ENCODE measurements at regions of chr2 and their contacts with region 1.

Region 1: GRCh38 chr2:210195101-210195852 is 24.1 kb upstream of the KANSL1L start:
- DNase-seq: peak; percentile 65
- ATAC-seq: peak; percentile 33
- H3K4me3 ChIP-seq: no peak overlapping the region
- H3K4me3 Mint-ChIP-seq: no peak overlapping the region
- H3K27ac ChIP-seq: no peak overlapping the region
- H3K27ac Mint-ChIP-seq: no peak overlapping the region
- H3K4me1 ChIP-seq: no peaks in the 10 kb centered on the region
- H3K4me1 Mint-ChIP-seq: no peaks in the 10 kb centered on the region
- H3K27me3 ChIP-seq: peaks cover 0 to 6% (median 0%) of the 10 kb centered on the region in 4 experiments
- H3K27me3 Mint-ChIP-seq: no peaks in the 10 kb centered on the region
- CTCF ChIP-seq: peak; percentile 84

Region 2: GRCh38 chr2:209977386-209978239 is 217.7 kb before region 1 on chr2:
- CTCF ChIA-PET with region 1: interaction called, 211 read pairs
- POLR2A ChIA-PET with region 1: interaction called, 3 read pairs
- intact Hi-C with region 1: loop called (anchors 1 kb)
- DNase-seq: peak; percentile 63
- ATAC-seq: no peak
- H3K4me3 ChIP-seq: no peak overlapping the region
- H3K4me3 Mint-ChIP-seq: no peak overlapping the region
- H3K27ac ChIP-seq: no peak overlapping the region
- H3K27ac Mint-ChIP-seq: no peak overlapping the region
- H3K4me1 ChIP-seq: no peaks in the 10 kb centered on the region
- H3K4me1 Mint-ChIP-seq: no peaks in the 10 kb centered on the region
- H3K27me3 ChIP-seq: no peaks in the 10 kb centered on the region
- H3K27me3 Mint-ChIP-seq: peaks cover 17% of the 10 kb centered on the region
- CTCF ChIP-seq: peak; percentile 91

Region 3: GRCh38 chr2:209986415-209986814 is 208.9 kb before region 1 on chr2:
- CTCF ChIA-PET with region 1: interaction called, 211 read pairs
- POLR2A ChIA-PET with region 1: no interaction called
- intact Hi-C with region 1: no loop called
- DNase-seq: no peak
- ATAC-seq: no peak
- H3K4me3 ChIP-seq: no peak overlapping the region
- H3K4me3 Mint-ChIP-seq: no peak overlapping the region
- H3K27ac ChIP-seq: no peak overlapping the region
- H3K27ac Mint-ChIP-seq: no peak overlapping the region
- H3K4me1 ChIP-seq: no peaks in the 10 kb centered on the region
- H3K4me1 Mint-ChIP-seq: peaks cover 3% of the 10 kb centered on the region
- H3K27me3 ChIP-seq: peaks cover 0 to 14% (median 0%) of the 10 kb centered on the region in 4 experiments
- H3K27me3 Mint-ChIP-seq: peaks cover 42% of the 10 kb centered on the region
- CTCF ChIP-seq: no peak

Region 4: DNA sequence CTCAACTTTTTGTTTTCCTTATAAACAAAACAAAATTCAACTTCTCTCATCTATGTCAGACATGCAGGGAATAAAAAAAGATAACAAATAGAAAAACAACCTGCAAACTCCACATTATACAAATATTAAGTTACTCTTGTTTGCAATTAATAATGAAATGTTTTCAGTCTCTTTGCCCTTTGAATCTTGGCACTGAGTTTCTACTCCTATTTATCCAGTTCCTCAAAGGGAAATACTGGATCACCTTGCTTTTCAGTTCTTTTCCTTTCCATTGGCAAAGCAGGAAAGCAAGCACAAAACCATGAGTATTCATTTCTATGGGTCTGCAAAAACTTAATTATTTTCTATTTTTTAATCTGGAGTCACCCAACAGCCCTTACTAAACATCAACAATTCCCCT is 47.7 kb before region 1 on chr2:
- CTCF ChIA-PET with region 1: no interaction called
- POLR2A ChIA-PET with region 1: no interaction called
- intact Hi-C with region 1: no loop called
- DNase-seq: no peak
- ATAC-seq: no peak
- H3K4me3 ChIP-seq: no peak overlapping the region
- H3K4me3 Mint-ChIP-seq: no peak overlapping the region
- H3K27ac ChIP-seq: no peak overlapping the region
- H3K27ac Mint-ChIP-seq: no peak overlapping the region
- H3K4me1 ChIP-seq: no peaks in the 10 kb centered on the region
- H3K4me1 Mint-ChIP-seq: peaks cover 2% of the 10 kb centered on the region
- H3K27me3 ChIP-seq: no peaks in the 10 kb centered on the region
- H3K27me3 Mint-ChIP-seq: no peaks in the 10 kb centered on the region
- CTCF ChIP-seq: no peak

Region 5: GRCh38 chr2:210224941-210225672 is 29.8 kb after region 1 on chr2 and contains the start of gene ACADL:
- CTCF ChIA-PET with region 1: no interaction called
- POLR2A ChIA-PET with region 1: no interaction called
- intact Hi-C with region 1: no loop called
- DNase-seq: peak; percentile 7
- ATAC-seq: no peak
- H3K4me3 ChIP-seq: no peak within 1 kb of the TSS
- H3K4me3 Mint-ChIP-seq: peak within 1 kb of the TSS; percentile 9
- H3K27ac ChIP-seq: no peak within 1 kb of the TSS
- H3K27ac Mint-ChIP-seq: no peak within 1 kb of the TSS
- H3K4me1 ChIP-seq: peaks cover 5 to 6% of the 10 kb centered on the region in 2 donors
- H3K4me1 Mint-ChIP-seq: peaks cover 6% of the 10 kb centered on the region
- H3K27me3 ChIP-seq: peaks cover 0 to 37% (median 15%) of the 10 kb centered on the region in 4 experiments
- H3K27me3 Mint-ChIP-seq: peaks cover 49% of the 10 kb centered on the region
- CTCF ChIP-seq: no peak
- total RNA-seq, gene ACADL: not detected in 2 replicates

Region 6: GRCh38 chr2:210288408-210288807 is 93.1 kb after region 1 on chr2:
- CTCF ChIA-PET with region 1: no interaction called
- POLR2A ChIA-PET with region 1: no interaction called
- intact Hi-C with region 1: no loop called
- DNase-seq: no peak
- ATAC-seq: no peak
- H3K4me3 ChIP-seq: no peak overlapping the region
- H3K4me3 Mint-ChIP-seq: no peak overlapping the region
- H3K27ac ChIP-seq: no peak overlapping the region
- H3K27ac Mint-ChIP-seq: no peak overlapping the region
- H3K4me1 ChIP-seq: no peaks in the 10 kb centered on the region
- H3K4me1 Mint-ChIP-seq: no peaks in the 10 kb centered on the region
- H3K27me3 ChIP-seq: no peaks in the 10 kb centered on the region
- H3K27me3 Mint-ChIP-seq: no peaks in the 10 kb centered on the region
- CTCF ChIP-seq: no peak